ENCODE measurements at regions of chr7 and their contacts with region 1.

Region 1: GRCh38 chr7:31982962-31983361 is 87.2 kb downstream of the PDE1C start:
- DNase-seq: no peak
- H3K4me3 ChIP-seq: no peak overlapping the region
- CTCF ChIP-seq: no peak

Region 2: GRCh38 chr7:32051128-32051527 is 68.2 kb after region 1 on chr7:
- in situ Hi-C with region 1: loop called (anchors 5 kb)
- DNase-seq: no peak
- H3K4me3 ChIP-seq: no peak overlapping the region
- CTCF ChIP-seq: no peak